GM12878 (cell line): ENCODE measurements at regions of chr9 and their contacts with region 1.

Region 1: GRCh38 chr9:113943112-113944009 is 67.3 kb downstream of the ZNF618 start:
- DNase-seq: no peak
- ATAC-seq: no peak
- H3K4me3 ChIP-seq: no peak overlapping the region
- H3K27ac ChIP-seq: no peak overlapping the region
- H3K4me1 ChIP-seq: no peaks in the 10 kb centered on the region
- H3K27me3 ChIP-seq: no peaks in the 10 kb centered on the region
- CTCF ChIP-seq: no peak
- EP300 ChIP-seq: no peak
- POLR2A ChIP-seq: no peak
- RAD21 ChIP-seq: no peak

Region 2: DNA sequence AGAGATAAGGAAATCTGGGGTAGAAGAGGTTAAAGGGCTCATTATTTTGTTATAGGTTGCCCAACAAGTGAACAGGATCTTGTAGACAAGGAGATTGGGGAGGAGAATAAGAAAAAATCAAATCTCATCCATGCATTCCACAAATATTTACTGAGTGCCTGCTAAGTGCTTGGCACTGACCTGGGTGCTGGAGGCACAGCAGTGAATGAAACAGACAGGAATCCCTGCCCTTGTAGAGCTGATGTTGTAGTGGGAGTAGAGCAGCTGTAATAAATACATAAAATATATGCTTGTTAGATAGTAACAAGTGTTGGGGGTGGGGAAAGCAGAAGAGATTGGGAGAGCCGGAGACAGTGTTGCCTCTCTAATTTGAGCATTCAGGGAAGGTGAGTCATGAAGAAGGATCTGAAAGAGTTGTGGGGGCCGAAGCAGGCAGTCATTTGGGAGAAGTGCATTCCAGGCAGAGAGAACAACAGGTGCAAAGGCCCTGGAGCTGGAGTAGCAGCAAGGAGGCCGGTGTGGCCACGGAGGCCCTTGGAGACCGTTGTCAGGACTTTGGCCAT is 30.6 kb after region 1 on chr9:
- CTCF ChIA-PET with region 1: no interaction called
- POLR2A ChIA-PET with region 1: no interaction called
- RAD21 ChIA-PET with region 1: no interaction called
- SMC1A ChIA-PET with region 1: no interaction called
- in situ Hi-C with region 1: no loop called
- intact Hi-C with region 1: no loop called
- DNase-seq: no peak
- ATAC-seq: no peak
- H3K4me3 ChIP-seq: no peak overlapping the region
- H3K27ac ChIP-seq: no peak overlapping the region
- H3K4me1 ChIP-seq: no peaks in the 10 kb centered on the region
- H3K27me3 ChIP-seq: peaks cover 0 to 3% of the 10 kb centered on the region in 2 experiments; a peak in 2 of 4 replicates
- CTCF ChIP-seq: no peak
- EP300 ChIP-seq: no peak
- POLR2A ChIP-seq: no peak
- RAD21 ChIP-seq: no peak

Region 3: DNA sequence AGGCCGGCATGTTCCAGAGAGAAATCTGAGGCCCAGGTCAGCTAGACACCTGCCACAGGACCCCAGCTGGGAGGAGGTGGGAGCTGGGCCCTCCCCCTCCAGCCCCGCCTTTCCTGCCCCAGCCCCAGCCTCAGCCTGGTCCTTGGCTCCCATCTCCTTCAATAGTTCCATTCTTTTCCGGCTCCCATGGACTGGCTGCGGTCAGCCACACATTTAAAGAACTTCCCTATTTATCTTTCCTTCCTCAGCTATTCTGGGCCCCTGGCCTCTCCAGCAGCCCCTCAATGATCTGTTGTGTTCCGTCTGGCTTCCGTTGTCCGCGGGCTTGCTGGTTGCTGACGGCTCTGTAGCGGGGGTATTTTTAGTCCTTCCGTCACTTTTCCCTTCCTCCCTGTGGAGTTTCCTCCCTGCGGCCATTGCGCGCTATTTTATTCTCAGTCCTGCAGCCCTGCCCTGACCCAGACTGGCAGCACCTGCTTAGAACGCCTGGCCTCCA is 60.9 kb after region 1 on chr9:
- CTCF ChIA-PET with region 1: no interaction called
- POLR2A ChIA-PET with region 1: no interaction called
- RAD21 ChIA-PET with region 1: no interaction called
- SMC1A ChIA-PET with region 1: no interaction called
- in situ Hi-C with region 1: loop called (anchors 10 kb)
- intact Hi-C with region 1: no loop called
- DNase-seq: no peak
- ATAC-seq: no peak
- H3K4me3 ChIP-seq: no peak overlapping the region
- H3K27ac ChIP-seq: no peak overlapping the region
- H3K4me1 ChIP-seq: no peaks in the 10 kb centered on the region; the same call in 1 of the 2 replicates
- H3K27me3 ChIP-seq: no peaks in the 10 kb centered on the region; a peak in 2 of 4 replicates
- CTCF ChIP-seq: no peak
- EP300 ChIP-seq: no peak
- POLR2A ChIP-seq: no peak
- RAD21 ChIP-seq: no peak

Region 4: GRCh38 chr9:114348906-114349482 is 405.6 kb after region 1 on chr9:
- CTCF ChIA-PET with region 1: no interaction called
- POLR2A ChIA-PET with region 1: no interaction called
- RAD21 ChIA-PET with region 1: no interaction called
- SMC1A ChIA-PET with region 1: no interaction called
- in situ Hi-C with region 1: no loop called
- intact Hi-C with region 1: no loop called
- DNase-seq: peak; percentile 94
- ATAC-seq: peak; percentile 96
- H3K4me3 ChIP-seq: no peak overlapping the region
- H3K27ac ChIP-seq: peak overlapping the region; percentile 29
- H3K4me1 ChIP-seq: peaks cover 25% of the 10 kb centered on the region
- H3K27me3 ChIP-seq: no peaks in the 10 kb centered on the region
- CTCF ChIP-seq: no peak
- EP300 ChIP-seq: peak; percentile 65 to 75
- POLR2A ChIP-seq: peak; percentile 59; the same call in 1 of the 2 replicates
- RAD21 ChIP-seq: no peak